HEK293 (cell line): ENCODE measurements at regions of chrX and their contacts with region 1.

Region 1: GRCh38 chrX:152632445-152633097 is 5.1 kb upstream of the GABRQ start:
- H3K4me3 ChIP-seq: no peak overlapping the region
- H3K27ac ChIP-seq: no peak overlapping the region
- H3K4me1 ChIP-seq: no peaks in the 10 kb centered on the region
- CTCF ChIP-seq: peak; percentile 34; the same call in 1 of the 2 replicates

Region 2: DNA sequence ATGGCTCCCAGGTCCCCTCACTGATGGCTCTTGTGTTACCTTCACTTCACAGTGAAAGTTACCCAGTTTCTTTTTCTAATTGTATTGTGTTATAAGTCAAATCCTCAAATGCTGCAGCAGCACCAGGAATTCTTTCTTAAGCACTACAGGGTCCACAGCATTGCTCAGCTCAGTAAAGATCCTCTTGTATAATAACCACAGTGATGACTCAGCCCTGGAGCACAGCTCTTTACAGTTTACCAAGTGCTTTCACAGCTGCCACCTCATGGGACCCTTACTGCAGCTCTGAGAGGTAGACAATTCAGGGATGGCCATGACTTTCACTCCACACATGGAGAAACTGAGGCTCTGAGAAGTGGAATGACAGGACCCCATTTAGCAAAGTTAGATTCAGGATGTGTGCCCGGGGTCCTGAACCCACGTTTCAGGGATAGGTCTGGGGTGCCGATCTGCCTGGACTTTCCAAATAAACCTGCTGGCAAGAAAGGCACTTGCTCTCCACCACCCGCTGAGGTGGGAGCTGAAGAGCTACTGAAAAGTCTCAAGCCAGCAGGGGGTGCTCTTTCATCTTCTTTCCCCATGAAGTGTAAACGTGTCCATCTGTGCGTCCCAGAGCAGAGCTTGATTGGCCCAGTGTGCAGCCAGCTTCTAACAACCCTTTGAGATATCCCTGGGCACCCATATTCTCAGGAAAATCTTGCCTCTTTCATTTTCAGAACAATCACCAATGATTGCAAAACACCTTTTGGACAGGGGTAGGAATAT is 30.5 kb before region 1 on chrX:
- CTCF ChIA-PET with region 1: interaction called, 11 read pairs
- POLR2A ChIA-PET with region 1: no interaction called
- H3K4me3 ChIP-seq: no peak overlapping the region
- H3K27ac ChIP-seq: no peak overlapping the region
- H3K4me1 ChIP-seq: no peaks in the 10 kb centered on the region
- CTCF ChIP-seq: no peak

Region 3: DNA sequence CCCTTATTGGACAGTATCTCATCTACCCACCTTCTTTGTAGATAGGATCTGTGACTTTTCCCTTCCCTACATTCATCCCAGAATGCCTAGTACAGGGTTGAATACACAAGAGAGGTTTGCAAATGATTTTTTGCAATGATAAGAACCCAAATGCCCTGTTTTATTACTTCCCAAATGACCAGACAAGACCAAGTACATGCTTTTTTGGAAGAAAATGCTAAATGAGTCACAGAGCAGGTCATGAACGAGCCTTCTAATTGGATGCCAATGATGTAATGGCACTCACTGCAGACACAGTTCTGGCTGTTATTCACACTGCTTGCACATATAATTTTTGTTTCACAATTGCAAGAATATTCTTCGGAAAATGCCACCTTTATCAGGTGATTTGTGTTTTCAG is 12.7 kb before region 1 on chrX:
- CTCF ChIA-PET with region 1: interaction called, 19 read pairs
- POLR2A ChIA-PET with region 1: no interaction called
- H3K4me3 ChIP-seq: no peak overlapping the region
- H3K27ac ChIP-seq: no peak overlapping the region
- H3K4me1 ChIP-seq: no peaks in the 10 kb centered on the region
- CTCF ChIP-seq: no peak

Region 4: GRCh38 chrX:152810403-152810802 is 177.8 kb after region 1 on chrX:
- CTCF ChIA-PET with region 1: no interaction called
- POLR2A ChIA-PET with region 1: no interaction called
- H3K4me3 ChIP-seq: no peak overlapping the region
- H3K27ac ChIP-seq: no peak overlapping the region
- H3K4me1 ChIP-seq: no peaks in the 10 kb centered on the region
- CTCF ChIP-seq: no peak